CD4-positive, alpha-beta memory T cell (primary cell): ENCODE measurements at regions of chr9 and their contacts with region 1.

Region 1: GRCh38 chr9:89278997-89279739 is 31.8 kb upstream of the CKS2 start:
- DNase-seq: peak in 4 of 5 donors; percentile 18 to 28 (median 28)
- H3K4me3 ChIP-seq: no peak overlapping the region
- H3K4me3 Mint-ChIP-seq: peak overlapping the region in 3 of 8 donors; percentile 4 to 9 (median 5)
- H3K27ac ChIP-seq: no peak overlapping the region
- H3K27ac Mint-ChIP-seq: no peak overlapping the region
- H3K4me1 ChIP-seq: peaks cover 23% of the 10 kb centered on the region
- H3K4me1 Mint-ChIP-seq: peaks cover 18 to 30% (median 23%) of the 10 kb centered on the region in 4 donors
- H3K27me3 ChIP-seq: no peaks in the 10 kb centered on the region
- H3K27me3 Mint-ChIP-seq: no peaks in the 10 kb centered on the region

Region 2: DNA sequence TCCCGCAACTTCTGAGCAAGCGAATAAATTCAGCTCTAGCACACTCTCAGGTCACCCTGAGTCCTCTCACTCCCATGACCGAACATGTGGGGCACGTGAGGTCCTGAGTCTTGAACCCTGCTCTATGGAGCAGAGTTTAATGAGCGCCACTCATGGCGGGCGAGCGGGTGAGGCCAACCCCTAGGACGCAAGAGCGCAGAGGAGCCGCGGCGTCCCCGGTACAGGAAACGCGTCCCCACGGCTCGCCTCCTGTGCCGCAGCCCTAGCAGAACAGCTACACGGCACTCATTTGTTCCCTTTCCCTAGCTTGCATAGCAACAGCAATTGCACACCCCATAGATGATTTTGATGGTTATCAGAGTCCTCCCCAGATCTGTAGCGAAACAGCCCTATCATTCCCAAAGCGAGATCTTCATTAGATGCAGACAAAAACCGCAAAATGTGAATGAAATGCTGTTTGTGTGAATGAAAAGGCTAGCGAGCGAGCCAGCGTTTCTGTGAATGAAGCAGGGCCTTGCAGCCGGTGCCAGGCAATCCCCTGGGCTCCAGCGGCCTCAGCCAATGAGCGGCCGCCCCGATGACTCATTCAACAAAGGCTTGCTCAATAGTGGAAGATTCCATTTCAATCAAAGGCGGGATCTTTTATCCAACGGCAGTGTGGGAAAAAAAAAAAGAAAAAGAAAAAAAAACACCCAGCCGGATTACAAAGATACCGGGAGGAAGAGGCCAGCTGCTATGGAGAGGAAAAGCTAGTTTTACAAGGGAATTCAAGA is 99.1 kb before region 1 on chr9:
- CTCF ChIA-PET with region 1: no interaction called
- POLR2A ChIA-PET with region 1: no interaction called
- intact Hi-C with region 1: loop called (anchors 5 kb)
- DNase-seq: peak in 3 of 5 donors; percentile 4 to 14 (median 7)
- H3K4me3 ChIP-seq: no peak overlapping the region
- H3K4me3 Mint-ChIP-seq: peak overlapping the region in 7 of 8 donors; percentile 29 to 86 (median 68)
- H3K27ac ChIP-seq: no peak overlapping the region
- H3K27ac Mint-ChIP-seq: no peak overlapping the region
- H3K4me1 ChIP-seq: peaks cover 12% of the 10 kb centered on the region
- H3K4me1 Mint-ChIP-seq: peaks cover 8 to 19% (median 15%) of the 10 kb centered on the region in 4 donors
- H3K27me3 ChIP-seq: peaks cover 24% of the 10 kb centered on the region
- H3K27me3 Mint-ChIP-seq: peaks cover 35 to 52% of the 10 kb centered on the region in 2 donors

Region 3: GRCh38 chr9:89204801-89205200 is 74.4 kb before region 1 on chr9:
- CTCF ChIA-PET with region 1: no interaction called
- POLR2A ChIA-PET with region 1: no interaction called
- intact Hi-C with region 1: no loop called
- DNase-seq: no peak
- H3K4me3 ChIP-seq: no peak overlapping the region
- H3K4me3 Mint-ChIP-seq: no peak overlapping the region
- H3K27ac ChIP-seq: no peak overlapping the region
- H3K27ac Mint-ChIP-seq: no peak overlapping the region
- H3K4me1 ChIP-seq: no peaks in the 10 kb centered on the region
- H3K4me1 Mint-ChIP-seq: no peaks in the 10 kb centered on the region
- H3K27me3 ChIP-seq: no peaks in the 10 kb centered on the region
- H3K27me3 Mint-ChIP-seq: peaks cover 0 to 4% of the 10 kb centered on the region in 2 donors

Region 4: GRCh38 chr9:89218040-89218928 is 60.9 kb before region 1 on chr9:
- CTCF ChIA-PET with region 1: no interaction called
- POLR2A ChIA-PET with region 1: no interaction called
- intact Hi-C with region 1: no loop called
- DNase-seq: no peak
- H3K4me3 ChIP-seq: no peak overlapping the region
- H3K4me3 Mint-ChIP-seq: no peak overlapping the region
- H3K27ac ChIP-seq: no peak overlapping the region
- H3K27ac Mint-ChIP-seq: no peak overlapping the region
- H3K4me1 ChIP-seq: no peaks in the 10 kb centered on the region
- H3K4me1 Mint-ChIP-seq: no peaks in the 10 kb centered on the region
- H3K27me3 ChIP-seq: no peaks in the 10 kb centered on the region
- H3K27me3 Mint-ChIP-seq: peaks cover 5 to 6% of the 10 kb centered on the region in 2 donors

Region 5: DNA sequence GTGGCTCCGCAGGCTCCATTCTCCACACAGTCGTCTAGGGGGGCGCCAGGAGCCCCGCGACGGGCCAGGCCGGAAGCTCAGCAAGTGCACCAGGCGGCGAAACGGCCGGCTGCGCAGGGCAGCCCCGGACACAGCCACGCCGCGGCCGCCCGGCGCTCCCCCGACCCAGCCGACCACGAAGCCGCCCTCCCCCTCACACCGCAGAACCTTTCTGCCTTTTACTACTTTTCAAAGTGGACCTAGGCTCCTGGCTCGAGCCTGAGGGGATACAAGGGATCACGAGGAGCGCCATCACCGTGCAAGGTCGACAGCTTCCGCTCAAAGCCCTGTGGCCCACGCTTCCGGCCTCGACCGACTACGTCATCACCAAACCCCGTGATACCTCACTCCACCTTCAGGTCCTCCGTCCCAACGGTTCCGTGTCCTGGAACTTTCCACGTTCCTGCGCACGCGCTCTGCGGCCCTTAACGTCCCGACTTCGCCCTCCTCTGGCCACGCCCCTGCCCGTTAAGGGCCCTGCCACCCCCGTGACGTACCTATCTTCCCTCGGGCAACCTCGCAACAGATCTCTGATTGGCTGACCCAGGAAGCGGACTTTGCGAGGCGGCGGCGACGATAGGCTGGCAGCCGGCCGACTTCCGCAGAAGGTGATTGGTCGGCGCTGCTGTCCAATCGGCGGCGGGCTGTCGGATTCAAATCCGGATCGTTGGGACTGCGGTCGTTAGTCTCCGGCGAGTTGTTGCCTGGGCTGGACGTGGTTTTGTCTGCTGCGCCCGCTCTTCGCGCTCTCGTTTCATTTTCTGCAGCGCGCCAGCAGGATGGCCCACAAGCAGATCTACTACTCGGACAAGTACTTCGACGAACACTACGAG is 31.5 kb after region 1 on chr9 and contains the start of gene CKS2:
- CTCF ChIA-PET with region 1: no interaction called
- POLR2A ChIA-PET with region 1: interaction called, 4 read pairs
- intact Hi-C with region 1: loop called (anchors 1 kb)
- DNase-seq: peak; percentile 99 to 100 (median 100)
- H3K4me3 ChIP-seq: peak within 1 kb of the TSS; percentile 59 to 77
- H3K4me3 Mint-ChIP-seq: peak within 1 kb of the TSS; percentile 91 to 98 (median 96)
- H3K27ac ChIP-seq: peak within 1 kb of the TSS; percentile 96
- H3K27ac Mint-ChIP-seq: peak within 1 kb of the TSS; percentile 99 to 100 (median 99)
- H3K4me1 ChIP-seq: peaks cover 36% of the 10 kb centered on the region
- H3K4me1 Mint-ChIP-seq: peaks cover 16 to 40% (median 30%) of the 10 kb centered on the region in 4 donors
- H3K27me3 ChIP-seq: no peaks in the 10 kb centered on the region
- H3K27me3 Mint-ChIP-seq: peaks cover 1 to 2% of the 10 kb centered on the region in 2 donors
- total RNA-seq, gene CKS2: 6.5 to 8.5 TPM